Cardiac septum (tissue), 1 donor: ENCODE measurements at regions of chr9 and their contacts with region 1.

Region 1: DNA sequence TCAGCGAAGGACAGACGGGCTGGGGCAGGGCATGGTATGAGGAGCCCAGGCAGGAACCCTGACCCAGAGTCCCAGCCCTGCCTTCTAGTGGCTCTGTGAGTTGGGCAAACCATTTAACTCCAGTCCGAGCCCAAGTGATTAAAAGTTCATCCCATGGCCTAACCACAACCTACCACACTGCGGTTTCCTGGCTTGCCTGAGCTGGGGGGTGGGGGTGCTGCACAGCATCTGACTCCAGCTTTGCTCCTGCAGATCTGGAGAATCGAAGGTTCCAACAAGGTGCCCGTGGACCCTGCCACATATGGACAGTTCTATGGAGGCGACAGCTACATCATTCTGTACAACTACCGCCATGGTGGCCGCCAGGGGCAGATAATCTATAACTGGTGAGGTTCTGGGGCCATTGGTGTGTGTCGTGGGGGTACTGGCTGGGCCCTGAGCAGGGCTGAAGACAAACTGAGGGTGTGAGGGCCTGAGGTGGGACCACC is 49.0 kb downstream of the STOM start:
- DNase-seq: no peak

Region 2: GRCh38 chr9:121213136-121213806 is 107.8 kb before region 1 on chr9:
- intact Hi-C with region 1: loop called (anchors 5 kb)
- DNase-seq: peak; percentile 90

Region 3: DNA sequence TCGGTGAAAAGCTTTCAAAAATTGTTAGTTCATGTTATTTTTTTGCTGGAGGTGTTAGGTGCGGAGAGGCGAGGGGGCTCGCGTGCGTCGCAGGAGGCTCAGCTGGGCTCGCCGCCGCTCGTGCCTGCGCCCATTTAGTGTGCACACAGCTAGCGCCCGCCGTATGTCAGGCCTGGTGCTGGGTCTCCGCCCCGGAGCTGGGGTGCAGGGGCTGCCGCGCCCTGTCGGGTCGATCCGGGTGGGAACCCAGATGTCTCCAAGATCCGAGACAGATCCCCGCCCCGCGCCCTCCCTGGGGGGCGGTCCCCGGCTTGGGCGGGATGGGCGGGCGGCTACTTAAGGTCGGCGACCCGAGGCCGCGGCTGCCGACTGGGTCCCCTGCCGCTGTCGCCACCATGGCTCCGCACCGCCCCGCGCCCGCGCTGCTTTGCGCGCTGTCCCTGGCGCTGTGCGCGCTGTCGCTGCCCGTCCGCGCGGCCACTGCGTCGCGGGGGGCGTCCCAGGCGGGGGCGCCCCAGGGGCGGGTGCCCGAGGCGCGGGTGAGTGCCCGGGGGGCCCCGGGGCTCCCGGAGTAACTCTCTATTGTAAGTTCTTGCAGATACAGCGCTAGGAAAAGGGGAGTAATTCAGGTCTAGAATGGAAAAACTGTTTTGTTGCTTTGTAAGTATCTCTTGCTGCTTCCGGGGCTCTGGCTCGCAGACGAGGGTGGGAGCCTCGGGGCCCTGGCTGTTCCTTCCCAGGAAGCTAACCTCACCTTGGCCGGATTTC is 21.4 kb before region 1 on chr9:
- intact Hi-C with region 1: loop called (anchors 2 kb)
- DNase-seq: peak; percentile 91

Region 4: GRCh38 chr9:121376214-121376830 is 55.3 kb after region 1 on chr9:
- intact Hi-C with region 1: loop called (anchors 2 kb)
- DNase-seq: no peak

Region 5: DNA sequence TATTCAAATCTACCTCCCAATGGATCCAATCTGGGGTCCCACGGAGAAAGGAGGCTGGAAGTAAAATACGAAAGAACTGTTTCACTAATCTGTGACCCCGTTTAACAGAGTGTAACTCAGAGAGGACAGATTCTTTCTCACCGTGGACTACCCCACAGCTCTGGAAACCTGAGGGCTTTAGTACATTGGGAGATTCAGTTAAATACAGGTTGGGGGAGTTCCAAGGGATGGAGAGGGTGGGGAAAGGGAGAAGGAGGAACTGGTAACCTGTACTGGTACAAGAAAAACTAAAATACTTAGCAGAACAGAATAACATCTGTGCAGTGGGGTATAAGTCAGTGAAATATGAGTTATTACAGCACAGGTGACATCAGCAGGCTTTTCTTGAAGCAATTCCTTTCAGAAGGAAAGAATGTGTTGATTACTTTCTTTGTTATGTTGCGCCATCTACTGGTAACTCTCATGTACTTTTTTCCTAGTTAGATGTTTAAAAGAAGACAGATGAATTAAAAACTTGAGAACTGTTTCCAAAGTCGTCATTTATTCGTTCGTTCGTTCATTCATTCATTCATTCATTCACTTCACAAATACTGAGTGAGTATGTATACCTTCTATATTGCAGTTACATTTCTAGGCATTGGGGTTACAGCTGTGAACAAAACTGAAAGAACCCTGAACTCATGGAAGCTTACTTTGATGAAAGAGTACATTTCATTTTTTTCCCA is 79.0 kb after region 1 on chr9:
- intact Hi-C with region 1: loop called (anchors 2 kb)
- DNase-seq: no peak

Region 6: GRCh38 chr9:121538246-121538645 is 217.2 kb after region 1 on chr9:
- intact Hi-C with region 1: loop called (anchors 10 kb)
- DNase-seq: no peak